Common myeloid progenitor, CD34-positive (primary cell): ENCODE measurements at regions of chr6 and their contacts with region 1.

Region 1: GRCh38 chr6:27518881-27519795 is 46.2 kb upstream of the ZNF184 start:
- DNase-seq: peak; percentile 84 to 94 (median 93)
- H3K4me3 ChIP-seq: peak overlapping the region; percentile 81 to 98 (median 88)
- H3K27ac ChIP-seq: peak overlapping the region; percentile 50 to 86
- H3K4me1 ChIP-seq: peaks cover 5 to 17% (median 9%) of the 10 kb centered on the region in 4 experiments
- H3K27me3 ChIP-seq: peaks cover 13 to 30% (median 21%) of the 10 kb centered on the region in 5 experiments

Region 2: DNA sequence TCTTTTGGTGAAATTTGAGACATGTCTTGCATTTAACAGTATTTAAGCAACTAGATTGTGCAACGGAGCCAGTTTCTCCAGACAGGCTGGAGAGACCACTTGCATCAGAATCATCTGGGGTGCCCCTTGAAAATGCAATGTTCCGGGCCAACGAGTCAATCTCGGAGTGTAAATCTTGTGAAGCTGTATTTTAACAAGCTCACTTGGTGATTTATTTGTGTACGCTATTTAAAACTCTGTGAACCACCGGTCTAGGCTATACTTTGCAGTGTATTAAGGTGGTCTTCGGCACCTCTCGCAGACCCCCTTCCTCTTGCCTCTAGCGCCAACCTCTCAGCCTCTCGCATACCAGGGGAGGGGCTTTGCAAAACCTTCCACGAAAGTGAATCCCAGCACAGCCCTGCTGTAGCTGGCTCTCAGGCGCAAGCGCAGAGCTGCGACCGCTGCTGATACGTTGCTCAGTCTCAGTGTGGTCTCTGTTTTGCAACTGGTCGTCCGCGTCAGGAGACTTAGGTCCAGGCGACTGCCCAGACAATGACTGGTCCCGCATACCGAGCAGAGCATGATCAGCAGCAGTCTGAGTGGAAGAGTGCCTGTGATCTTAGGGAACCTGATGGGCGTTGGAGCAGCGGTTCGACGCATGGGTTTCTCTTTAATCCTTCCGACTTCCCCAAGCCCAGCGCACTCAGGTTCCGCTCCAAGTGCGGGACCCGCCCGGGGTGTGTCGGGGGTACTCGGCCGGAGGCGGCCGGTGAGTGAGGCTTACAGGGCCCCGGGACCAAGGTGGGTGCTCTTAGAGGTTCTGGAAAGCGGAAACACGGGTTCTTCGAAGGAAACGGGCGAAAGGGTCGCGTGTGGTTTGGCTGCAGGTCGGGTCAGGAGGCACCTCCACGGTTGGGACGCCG is 130.6 kb before region 1 on chr6 and contains the start of gene ZNF391:
- CTCF ChIA-PET with region 1: no interaction called
- POLR2A ChIA-PET with region 1: no interaction called
- DNase-seq: peak; percentile 84 to 89 (median 86)
- H3K4me3 ChIP-seq: peak within 1 kb of the TSS; percentile 66 to 100 (median 93)
- H3K27ac ChIP-seq: peak within 1 kb of the TSS; percentile 40 to 79
- H3K4me1 ChIP-seq: peaks cover 3 to 13% (median 8%) of the 10 kb centered on the region in 4 experiments
- H3K27me3 ChIP-seq: no peaks in the 10 kb centered on the region

Region 3: GRCh38 chr6:27503436-27504030 is 15.6 kb before region 1 on chr6:
- CTCF ChIA-PET with region 1: interaction called, 32 read pairs
- POLR2A ChIA-PET with region 1: no interaction called
- DNase-seq: peak; percentile 78 to 92 (median 88)
- H3K4me3 ChIP-seq: peak overlapping the region in 6 of 7 experiments; percentile 68 to 99 (median 84)
- H3K27ac ChIP-seq: peak overlapping the region in 1 of 2 experiments; percentile 77
- H3K4me1 ChIP-seq: peaks cover 12 to 14% (median 13%) of the 10 kb centered on the region in 4 experiments
- H3K27me3 ChIP-seq: peaks cover 10 to 55% (median 21%) of the 10 kb centered on the region in 5 experiments